Naive thymus-derived CD4-positive, alpha-beta T cell (primary cell): ENCODE measurements at regions of chr20 and their contacts with region 1.

Region 1: DNA sequence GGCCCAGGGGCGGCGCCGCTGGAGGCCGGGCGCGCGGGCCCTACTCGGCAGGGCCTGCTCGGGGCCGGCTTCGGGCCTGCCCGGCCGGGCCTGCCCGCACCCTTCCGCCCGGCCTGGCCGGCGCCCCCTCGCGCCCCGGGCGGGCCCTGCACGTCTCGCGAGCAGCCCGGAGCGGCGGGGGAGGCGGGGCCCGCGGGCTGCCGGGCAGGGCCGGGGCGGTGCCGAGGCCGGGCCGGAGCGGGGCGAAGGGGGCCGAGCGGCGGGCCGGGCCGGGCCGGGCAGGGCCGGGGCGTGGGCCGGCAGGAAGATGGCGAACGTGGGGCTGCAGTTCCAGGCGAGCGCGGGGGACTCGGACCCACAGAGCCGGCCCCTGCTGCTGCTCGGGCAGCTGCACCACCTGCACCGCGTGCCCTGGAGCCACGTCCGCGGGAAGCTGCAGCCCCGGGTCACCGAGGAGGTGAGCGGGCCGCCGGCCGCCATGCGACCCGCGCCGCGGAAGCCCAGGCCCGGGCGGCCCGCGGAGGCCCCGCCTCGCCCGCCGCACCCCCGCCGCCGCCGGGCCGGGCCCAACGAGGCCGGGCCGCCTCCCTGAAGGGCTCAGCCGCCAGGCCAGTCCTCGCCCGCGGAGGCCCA is at the start of gene NPEPL1:
- DNase-seq: peak; percentile 37 to 85 (median 55)
- ATAC-seq: peak; percentile 93
- H3K4me3 ChIP-seq: peak within 1 kb of the TSS; percentile 19
- H3K4me3 Mint-ChIP-seq: peak within 1 kb of the TSS; percentile 58 to 89 (median 81)
- H3K27ac ChIP-seq: peak within 1 kb of the TSS; percentile 68
- H3K27ac Mint-ChIP-seq: peak within 1 kb of the TSS; percentile 63 to 87 (median 80)
- H3K4me1 ChIP-seq: peaks cover 4 to 7% of the 10 kb centered on the region in 2 donors
- H3K4me1 Mint-ChIP-seq: peaks cover 4 to 19% (median 10%) of the 10 kb centered on the region in 7 donors
- H3K27me3 ChIP-seq: no peaks in the 10 kb centered on the region
- H3K27me3 Mint-ChIP-seq: no peaks in the 10 kb centered on the region
- total RNA-seq, gene NPEPL1: 32.8 to 76.2 (median 50.5) TPM

Region 2: DNA sequence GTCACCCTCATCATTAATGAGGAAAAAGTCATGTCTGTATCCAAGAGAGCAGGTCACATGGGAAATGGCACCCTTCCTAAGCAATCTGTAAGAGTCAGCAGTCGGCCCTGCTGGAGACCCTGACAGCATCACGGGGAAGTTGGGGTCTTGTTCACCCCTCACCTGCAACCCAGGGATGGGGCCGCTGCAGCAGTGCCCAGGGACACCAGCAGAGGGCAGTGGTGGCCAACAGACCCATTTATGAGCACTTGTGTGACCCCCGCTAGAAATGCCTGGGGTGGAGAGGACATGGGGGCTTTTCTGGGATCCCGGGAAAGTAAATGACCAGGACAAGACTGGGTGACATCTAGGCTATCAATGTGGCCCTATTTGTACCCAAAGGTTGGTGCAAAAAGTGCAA is 500.1 kb before region 1 on chr20:
- CTCF ChIA-PET with region 1: no interaction called
- POLR2A ChIA-PET with region 1: no interaction called
- intact Hi-C with region 1: no loop called
- DNase-seq: peak in 5 of 9 donors; percentile 14 to 33 (median 23)
- ATAC-seq: peak; percentile 44
- H3K4me3 ChIP-seq: no peak overlapping the region
- H3K4me3 Mint-ChIP-seq: no peak overlapping the region
- H3K27ac ChIP-seq: no peak overlapping the region
- H3K27ac Mint-ChIP-seq: peak overlapping the region in 1 of 9 donors; percentile 78
- H3K4me1 ChIP-seq: no peaks in the 10 kb centered on the region
- H3K4me1 Mint-ChIP-seq: no peaks in the 10 kb centered on the region
- H3K27me3 ChIP-seq: no peaks in the 10 kb centered on the region
- H3K27me3 Mint-ChIP-seq: peaks cover 0 to 20% (median 13%) of the 10 kb centered on the region in 5 donors

Region 3: GRCh38 chr20:58481481-58482021 is 211.2 kb before region 1 on chr20:
- CTCF ChIA-PET with region 1: no interaction called
- POLR2A ChIA-PET with region 1: no interaction called
- intact Hi-C with region 1: loop called in 1 of 2 experiments (anchors 5 kb)
- DNase-seq: peak in 8 of 9 donors; percentile 7 to 72 (median 46)
- ATAC-seq: peak; percentile 68
- H3K4me3 ChIP-seq: no peak overlapping the region
- H3K4me3 Mint-ChIP-seq: peak overlapping the region in 2 of 10 donors; percentile 35 to 42
- H3K27ac ChIP-seq: no peak overlapping the region
- H3K27ac Mint-ChIP-seq: no peak overlapping the region
- H3K4me1 ChIP-seq: no peaks in the 10 kb centered on the region
- H3K4me1 Mint-ChIP-seq: peaks cover 0 to 9% (median 5%) of the 10 kb centered on the region in 7 donors
- H3K27me3 ChIP-seq: no peaks in the 10 kb centered on the region
- H3K27me3 Mint-ChIP-seq: peaks cover 8 to 33% (median 23%) of the 10 kb centered on the region in 5 donors

Region 4: DNA sequence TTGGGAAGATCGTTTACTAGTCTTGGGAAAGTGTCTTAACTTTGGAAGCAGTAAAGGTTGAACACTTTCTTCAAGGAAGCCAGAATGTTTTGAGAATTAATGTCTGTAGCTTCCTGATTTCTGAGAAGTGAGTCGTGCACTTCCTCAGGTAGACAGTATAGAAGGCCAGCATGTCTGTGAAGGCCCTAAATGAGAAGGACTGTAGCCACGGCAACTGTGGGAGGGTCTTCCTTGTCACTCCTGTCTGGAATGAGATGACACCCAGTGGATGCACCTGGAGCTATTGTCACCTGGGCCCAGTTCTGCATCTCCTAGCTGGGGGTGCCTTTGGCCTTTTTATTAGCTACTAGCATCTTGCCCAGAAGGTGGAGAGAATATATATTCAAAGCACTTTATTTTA is 32.9 kb before region 1 on chr20:
- CTCF ChIA-PET with region 1: interaction called, 8 read pairs
- POLR2A ChIA-PET with region 1: interaction called, 20 read pairs
- intact Hi-C with region 1: loop called in 1 of 2 experiments (anchors 1 kb)
- DNase-seq: peak in 1 of 9 donors; percentile 29
- ATAC-seq: peak; percentile 26
- H3K4me3 ChIP-seq: peak overlapping the region; percentile 2
- H3K4me3 Mint-ChIP-seq: peak overlapping the region; percentile 73 to 89 (median 82)
- H3K27ac ChIP-seq: peak overlapping the region; percentile 93
- H3K27ac Mint-ChIP-seq: peak overlapping the region; percentile 89 to 100 (median 98)
- H3K4me1 ChIP-seq: peaks cover 63 to 64% of the 10 kb centered on the region in 2 donors
- H3K4me1 Mint-ChIP-seq: peaks cover 66 to 97% (median 88%) of the 10 kb centered on the region in 7 donors
- H3K27me3 ChIP-seq: no peaks in the 10 kb centered on the region
- H3K27me3 Mint-ChIP-seq: no peaks in the 10 kb centered on the region

Region 5: GRCh38 chr20:58677084-58677604 is 15.6 kb before region 1 on chr20:
- CTCF ChIA-PET with region 1: no interaction called
- POLR2A ChIA-PET with region 1: no interaction called
- intact Hi-C with region 1: no loop called
- DNase-seq: no peak
- ATAC-seq: no peak
- H3K4me3 ChIP-seq: no peak overlapping the region
- H3K4me3 Mint-ChIP-seq: no peak overlapping the region
- H3K27ac ChIP-seq: no peak overlapping the region
- H3K27ac Mint-ChIP-seq: no peak overlapping the region
- H3K4me1 ChIP-seq: no peaks in the 10 kb centered on the region
- H3K4me1 Mint-ChIP-seq: peaks cover 0 to 4% (median 0%) of the 10 kb centered on the region in 7 donors
- H3K27me3 ChIP-seq: no peaks in the 10 kb centered on the region
- H3K27me3 Mint-ChIP-seq: no peaks in the 10 kb centered on the region